ENCODE measurements at regions of chr12 and their contacts with region 1.

Region 1: GRCh38 chr12:45170456-45171042 is 45.3 kb upstream of the ANO6 start:
- DNase-seq: peak; percentile 84 to 90
- H3K4me3 ChIP-seq: no peak overlapping the region
- H3K4me3 Mint-ChIP-seq: no peak overlapping the region
- H3K27ac Mint-ChIP-seq: no peak overlapping the region
- H3K4me1 ChIP-seq: no peaks in the 10 kb centered on the region
- H3K4me1 Mint-ChIP-seq: peaks cover 12% of the 10 kb centered on the region
- H3K27me3 ChIP-seq: no peaks in the 10 kb centered on the region
- H3K27me3 Mint-ChIP-seq: no peaks in the 10 kb centered on the region
- CTCF ChIP-seq: peak; percentile 94 to 95

Region 2: DNA sequence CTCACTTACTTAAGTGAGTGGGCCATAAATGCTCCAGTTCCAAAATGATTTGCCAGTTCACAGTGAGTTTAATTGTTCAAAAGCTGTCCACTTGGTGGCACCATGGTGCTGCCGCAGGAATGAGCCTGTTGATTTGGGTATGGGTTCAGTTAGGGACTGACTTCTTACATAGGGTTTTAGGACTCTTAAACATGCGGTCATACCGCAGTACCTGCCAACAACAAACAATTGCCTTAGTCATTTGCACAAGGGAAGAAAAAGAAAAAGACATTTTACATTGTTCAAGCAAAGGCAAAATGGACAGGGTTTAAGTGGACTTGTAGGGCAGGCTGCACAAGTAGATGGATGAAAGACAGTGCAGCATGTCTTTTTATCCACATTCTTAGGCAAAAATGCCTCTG is 39.7 kb before region 1 on chr12:
- CTCF ChIA-PET with region 1: interaction called, 3 read pairs
- POLR2A ChIA-PET with region 1: no interaction called
- intact Hi-C with region 1: loop called (anchors 2 kb)
- DNase-seq: peak; percentile 65 to 74
- H3K4me3 ChIP-seq: no peak overlapping the region
- H3K4me3 Mint-ChIP-seq: no peak overlapping the region
- H3K27ac Mint-ChIP-seq: no peak overlapping the region
- H3K4me1 ChIP-seq: no peaks in the 10 kb centered on the region
- H3K4me1 Mint-ChIP-seq: no peaks in the 10 kb centered on the region
- H3K27me3 ChIP-seq: no peaks in the 10 kb centered on the region
- H3K27me3 Mint-ChIP-seq: no peaks in the 10 kb centered on the region
- CTCF ChIP-seq: peak; percentile 77 to 85

Region 3: GRCh38 chr12:45349911-45350310 is 179.4 kb after region 1 on chr12:
- CTCF ChIA-PET with region 1: no interaction called
- POLR2A ChIA-PET with region 1: no interaction called
- intact Hi-C with region 1: loop called (anchors 5 kb)
- DNase-seq: no peak
- H3K4me3 ChIP-seq: no peak overlapping the region
- H3K4me3 Mint-ChIP-seq: no peak overlapping the region
- H3K27ac Mint-ChIP-seq: no peak overlapping the region
- H3K4me1 ChIP-seq: peaks cover 24% of the 10 kb centered on the region
- H3K4me1 Mint-ChIP-seq: peaks cover 28% of the 10 kb centered on the region
- H3K27me3 ChIP-seq: no peaks in the 10 kb centered on the region
- H3K27me3 Mint-ChIP-seq: no peaks in the 10 kb centered on the region
- CTCF ChIP-seq: no peak

Region 4: DNA sequence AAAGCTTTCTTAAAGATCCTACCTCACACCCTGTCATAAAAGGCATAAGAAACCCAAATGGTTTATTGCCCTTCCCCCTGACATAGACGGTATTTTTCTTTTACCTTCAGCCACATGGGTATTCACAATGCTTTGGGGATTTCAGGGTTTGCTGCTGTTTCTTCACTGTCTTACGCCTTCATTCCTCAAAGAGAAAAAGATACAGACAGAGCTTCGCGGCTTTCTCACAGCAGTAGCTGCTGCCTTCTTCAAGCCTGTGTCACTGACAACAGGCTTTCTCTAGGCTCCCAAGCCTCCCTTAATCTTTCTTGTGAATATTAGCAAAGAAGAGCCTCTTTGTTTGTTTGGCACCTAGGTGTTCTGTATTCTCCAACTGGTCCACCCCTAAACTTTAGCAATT is 361.6 kb after region 1 on chr12:
- CTCF ChIA-PET with region 1: no interaction called
- POLR2A ChIA-PET with region 1: no interaction called
- intact Hi-C with region 1: loop called (anchors 10 kb)
- DNase-seq: no peak
- H3K4me3 ChIP-seq: no peak overlapping the region
- H3K4me3 Mint-ChIP-seq: no peak overlapping the region
- H3K27ac Mint-ChIP-seq: no peak overlapping the region
- H3K4me1 ChIP-seq: no peaks in the 10 kb centered on the region
- H3K4me1 Mint-ChIP-seq: no peaks in the 10 kb centered on the region
- H3K27me3 ChIP-seq: no peaks in the 10 kb centered on the region
- H3K27me3 Mint-ChIP-seq: no peaks in the 10 kb centered on the region
- CTCF ChIP-seq: no peak